Activated B cell treated with CpG ODN at 0.5 μM for 24 hours (primary cell): ENCODE measurements at regions of chr1 and their contacts with region 1.

Region 1: DNA sequence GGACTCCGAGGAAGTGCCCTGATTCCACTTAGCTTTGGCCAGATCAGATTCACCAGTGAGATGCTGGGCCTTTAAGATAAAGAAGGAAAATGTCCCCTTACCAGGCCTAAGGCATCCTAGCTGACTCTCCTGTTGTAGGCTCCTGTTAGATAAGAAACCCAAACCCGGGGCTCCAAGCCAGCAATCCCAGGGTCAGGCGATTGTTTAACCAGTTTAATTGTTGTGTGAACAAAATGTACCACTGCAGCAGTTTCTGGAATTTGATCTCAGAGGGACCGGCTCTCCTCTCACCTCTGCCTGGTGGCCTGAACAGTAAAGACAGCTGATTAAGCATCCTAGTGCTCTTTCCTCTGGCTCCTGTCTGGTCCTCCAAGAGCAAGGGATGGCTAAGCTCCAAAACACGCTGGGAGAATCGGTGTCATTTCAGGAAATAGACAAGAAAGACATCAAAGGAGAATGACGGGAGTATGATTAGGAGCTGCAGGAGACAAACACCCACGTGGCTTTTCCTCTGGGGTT is 9.3 kb upstream of the KLHDC8A start:
- DNase-seq: no peak
- ATAC-seq: no peak
- H3K4me3 Mint-ChIP-seq: no peak overlapping the region
- H3K27ac Mint-ChIP-seq: no peak overlapping the region
- H3K4me1 Mint-ChIP-seq: no peaks in the 10 kb centered on the region
- H3K27me3 Mint-ChIP-seq: peaks cover 4% of the 10 kb centered on the region
- CTCF ChIP-seq: no peak

Region 2: DNA sequence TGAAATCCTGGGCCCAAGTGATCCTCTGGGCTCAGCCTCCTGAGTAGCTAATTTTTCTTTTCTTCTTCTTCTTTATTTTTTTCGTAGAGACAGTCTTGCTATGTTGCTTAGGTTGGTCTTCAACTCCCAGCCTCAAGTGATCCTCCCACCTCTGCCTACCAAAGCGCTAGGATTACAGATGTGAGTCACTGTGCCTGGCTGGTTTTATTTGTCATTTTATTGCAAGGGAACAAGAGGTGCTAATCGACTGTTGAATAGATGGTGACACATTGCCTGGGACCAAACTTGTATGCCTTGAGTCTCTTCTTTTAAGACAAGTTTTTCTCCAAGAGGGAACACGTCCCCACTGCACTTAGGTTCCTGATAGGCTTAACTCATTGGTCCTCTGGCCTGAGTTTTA is 10.7 kb after region 1 on chr1:
- CTCF ChIA-PET with region 1: no interaction called
- POLR2A ChIA-PET with region 1: no interaction called
- intact Hi-C with region 1: no loop called
- DNase-seq: no peak
- ATAC-seq: no peak
- H3K4me3 Mint-ChIP-seq: no peak overlapping the region
- H3K27ac Mint-ChIP-seq: no peak overlapping the region
- H3K4me1 Mint-ChIP-seq: no peaks in the 10 kb centered on the region
- H3K27me3 Mint-ChIP-seq: peaks cover 45% of the 10 kb centered on the region
- CTCF ChIP-seq: no peak

Region 3: DNA sequence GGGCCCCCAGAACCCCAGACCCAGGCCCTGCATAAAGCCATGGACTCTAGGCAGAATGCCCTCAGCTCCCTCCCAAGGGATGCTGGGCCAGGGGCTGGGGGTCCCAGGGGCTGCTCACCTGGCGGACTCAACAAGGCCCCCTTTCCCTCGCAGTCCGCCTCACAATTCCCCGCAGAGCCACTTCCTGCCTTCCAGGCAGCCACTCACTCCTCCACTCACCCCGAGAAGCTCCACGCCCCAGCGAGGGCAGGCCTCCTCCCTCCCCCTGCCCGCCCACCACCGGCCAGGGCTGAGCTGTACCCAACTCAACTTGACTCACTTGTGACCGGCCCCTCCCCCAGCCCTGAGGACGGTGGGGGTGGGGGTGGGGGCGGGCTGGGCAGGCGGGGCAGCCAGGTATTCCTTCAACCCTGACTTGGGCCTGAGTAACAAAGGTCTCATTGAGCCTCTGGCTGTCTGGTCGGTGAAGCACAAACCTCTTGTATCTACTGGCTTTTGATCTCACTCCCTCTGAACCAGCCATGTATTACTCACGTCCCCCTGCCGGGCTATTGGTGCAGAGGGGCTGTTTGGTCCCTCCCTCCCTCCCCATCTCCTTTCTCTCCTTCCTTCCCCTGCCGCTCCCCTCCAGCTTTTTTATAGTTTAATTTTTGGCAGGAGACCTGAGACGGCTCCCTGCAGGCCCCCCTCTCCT is 83.9 kb after region 1 on chr1:
- CTCF ChIA-PET with region 1: no interaction called
- POLR2A ChIA-PET with region 1: no interaction called
- intact Hi-C with region 1: no loop called
- DNase-seq: no peak
- ATAC-seq: no peak
- H3K4me3 Mint-ChIP-seq: no peak overlapping the region
- H3K27ac Mint-ChIP-seq: no peak overlapping the region
- H3K4me1 Mint-ChIP-seq: peaks cover 5% of the 10 kb centered on the region
- H3K27me3 Mint-ChIP-seq: peaks cover 32% of the 10 kb centered on the region
- CTCF ChIP-seq: no peak

Region 4: GRCh38 chr1:205645519-205645918 is 279.5 kb after region 1 on chr1:
- CTCF ChIA-PET with region 1: no interaction called
- POLR2A ChIA-PET with region 1: interaction called, 11 read pairs
- intact Hi-C with region 1: no loop called
- DNase-seq: no peak
- ATAC-seq: no peak
- H3K4me3 Mint-ChIP-seq: no peak overlapping the region
- H3K27ac Mint-ChIP-seq: no peak overlapping the region
- H3K4me1 Mint-ChIP-seq: peaks cover 1% of the 10 kb centered on the region
- H3K27me3 Mint-ChIP-seq: no peaks in the 10 kb centered on the region
- CTCF ChIP-seq: no peak